ENCODE measurements at regions of chr11 and their contacts with region 1.

Region 1: DNA sequence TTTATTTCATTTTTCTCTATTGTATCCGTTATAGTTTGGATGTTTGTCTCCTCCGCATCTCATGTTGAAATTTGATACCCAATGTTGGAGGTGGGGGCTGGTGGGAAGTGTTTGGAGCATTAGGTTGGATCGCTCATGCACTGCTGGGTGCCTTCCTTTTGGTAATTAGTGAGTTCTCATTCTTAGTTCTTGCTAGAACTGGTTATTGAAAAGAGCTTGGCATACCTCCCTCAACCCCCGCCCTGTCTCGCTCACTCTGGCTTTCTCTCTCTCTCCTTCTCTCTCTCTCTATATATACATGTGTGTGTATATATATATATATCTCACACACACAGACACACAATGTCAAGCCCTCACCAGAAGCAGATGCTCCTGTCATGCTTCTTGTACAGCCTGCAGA is 978.7 kb downstream of the DLG2 start:
- DNase-seq: no peak
- H3K4me3 ChIP-seq: no peak overlapping the region
- CTCF ChIP-seq: no peak

Region 2: GRCh38 chr11:84594602-84595001 is 53.9 kb before region 1 on chr11:
- in situ Hi-C with region 1: loop called (anchors 5 kb)
- DNase-seq: no peak
- H3K4me3 ChIP-seq: no peak overlapping the region
- CTCF ChIP-seq: no peak